H1 (cell line): ENCODE measurements at regions of chr7 and their contacts with region 1.

Region 1: DNA sequence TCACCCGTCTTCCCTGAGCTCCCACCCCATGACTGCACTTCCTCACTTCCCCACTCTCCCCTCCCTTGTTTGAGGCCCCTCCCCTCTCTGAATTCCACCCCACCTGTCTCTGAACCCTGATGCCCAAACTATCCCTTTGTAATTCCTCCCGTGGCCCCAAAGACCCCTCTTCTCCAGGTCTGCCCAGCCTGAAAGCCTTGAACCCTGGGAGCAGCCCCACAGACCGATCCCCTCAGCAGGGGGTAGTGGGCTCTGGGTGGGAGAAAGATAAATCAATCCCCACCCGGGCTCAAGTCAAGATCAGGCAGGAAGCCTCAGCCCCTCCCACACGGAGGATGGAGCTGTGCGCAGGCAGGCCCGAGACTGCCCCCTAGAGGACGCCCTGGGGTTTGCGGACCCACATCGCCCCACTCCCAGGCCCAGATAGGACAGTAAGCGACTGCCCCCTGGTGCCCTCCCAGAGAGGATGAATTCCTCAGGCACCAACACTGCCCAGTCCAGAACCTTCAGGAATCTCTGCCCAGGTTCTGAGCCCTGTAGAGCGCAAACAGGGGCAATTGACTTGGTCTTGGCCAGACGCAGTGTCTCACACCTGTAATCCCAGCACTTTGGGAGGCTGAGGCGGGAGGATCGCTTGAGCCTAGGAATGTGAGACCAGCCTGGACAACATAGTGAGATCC is 11.7 kb downstream of the HSPB1 start:
- DNase-seq: peak; percentile 95 to 100
- H3K4me3 ChIP-seq: peak overlapping the region in 3 of 4 experiments; percentile 34 to 62 (median 49); a peak in 5 of 8 replicates
- H3K27ac ChIP-seq: no peak overlapping the region
- H3K4me1 ChIP-seq: peaks cover 0 to 14% (median 7%) of the 10 kb centered on the region in 4 experiments; a peak in 6 of 7 replicates
- H3K27me3 ChIP-seq: no peaks in the 10 kb centered on the region
- CTCF ChIP-seq: peak; percentile 99 to 100 (median 100)
- EP300 ChIP-seq: no peak
- POLR2A ChIP-seq: no peak
- RAD21 ChIP-seq: peak; percentile 99 to 100

Region 2: DNA sequence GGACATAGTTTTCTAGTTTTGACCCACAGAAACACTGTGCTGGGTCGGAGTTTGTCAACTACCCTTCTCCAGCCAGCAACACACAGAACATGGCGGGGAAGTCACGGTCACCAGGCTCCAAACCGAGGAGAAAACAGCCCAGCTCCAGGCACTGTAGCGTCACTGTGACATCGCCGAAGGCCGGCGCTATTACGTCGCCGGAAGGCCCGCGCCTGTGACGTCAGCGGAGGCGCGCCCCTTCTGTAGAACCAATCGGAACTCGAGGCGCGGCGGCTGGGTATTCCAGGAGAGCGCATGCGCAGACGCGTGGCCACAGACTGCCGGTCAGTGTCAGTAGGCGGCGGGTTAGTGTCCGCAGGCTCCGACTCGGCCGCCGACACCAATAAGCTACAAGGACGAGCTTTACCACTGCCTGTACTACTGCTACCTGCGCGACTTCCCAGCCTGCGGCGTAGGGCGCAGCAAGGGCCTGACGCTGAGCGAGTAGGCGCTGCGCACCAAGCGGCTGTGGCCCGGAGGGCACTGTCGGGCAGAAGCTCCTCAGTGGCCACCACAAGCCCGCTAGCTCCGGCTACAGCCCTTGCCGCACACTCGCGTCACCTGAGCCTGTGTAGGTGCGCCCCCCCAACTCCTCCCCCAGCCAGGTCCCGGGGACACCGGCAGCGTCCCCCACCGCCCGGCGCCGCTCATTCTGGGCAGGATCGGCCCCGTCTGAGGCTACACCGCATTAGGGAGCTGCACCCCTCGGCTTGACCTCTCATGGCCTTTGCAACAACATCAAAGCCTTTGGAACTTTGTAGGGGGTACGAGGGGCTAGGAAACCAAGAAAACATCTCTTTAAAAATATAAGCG is 147.6 kb before region 1 on chr7:
- CTCF ChIA-PET with region 1: interaction called, 10 read pairs
- POLR2A ChIA-PET with region 1: no interaction called
- DNase-seq: peak; percentile 87 to 99
- H3K4me3 ChIP-seq: peak overlapping the region; percentile 54 to 69 (median 56)
- H3K27ac ChIP-seq: peak overlapping the region; percentile 87
- H3K4me1 ChIP-seq: peaks cover 2 to 17% (median 9%) of the 10 kb centered on the region in 4 experiments
- H3K27me3 ChIP-seq: no peaks in the 10 kb centered on the region
- CTCF ChIP-seq: no peak
- EP300 ChIP-seq: peak in 1 of 2 experiments; percentile 68; a peak in 1 of 3 replicates
- POLR2A ChIP-seq: peak; percentile 49 to 86
- RAD21 ChIP-seq: peak in 1 of 2 experiments; percentile 14; a peak in 2 of 4 replicates

Region 3: DNA sequence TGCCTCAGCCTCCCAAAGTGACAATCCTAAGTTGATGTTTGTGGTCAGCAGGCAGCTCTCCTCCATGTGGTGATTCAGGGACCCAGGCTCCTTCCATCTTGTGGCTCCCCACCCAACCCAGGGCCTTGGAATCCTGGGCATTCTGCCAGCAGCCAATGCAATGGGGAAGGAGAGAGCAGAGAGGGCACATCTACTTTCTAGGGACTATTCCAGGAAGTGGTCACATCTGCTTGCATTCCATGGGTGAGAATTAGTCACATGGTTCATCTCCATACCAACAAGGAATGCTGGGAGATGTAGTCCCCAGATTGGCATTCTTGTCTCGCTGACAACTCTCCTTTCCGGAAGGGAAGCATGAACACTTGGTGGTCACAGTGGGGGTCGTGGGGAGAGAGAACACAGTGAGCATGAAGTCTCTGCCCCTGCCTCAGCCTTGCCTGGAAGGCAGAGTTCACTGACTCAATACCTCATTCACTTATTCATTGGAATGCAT is 122.4 kb before region 1 on chr7:
- CTCF ChIA-PET with region 1: interaction called, 11 read pairs
- POLR2A ChIA-PET with region 1: interaction called, 4 read pairs
- DNase-seq: peak; percentile 34 to 71
- H3K4me3 ChIP-seq: no peak overlapping the region
- H3K27ac ChIP-seq: no peak overlapping the region
- H3K4me1 ChIP-seq: peaks cover 0 to 7% (median 4%) of the 10 kb centered on the region in 4 experiments; a peak in 5 of 7 replicates
- H3K27me3 ChIP-seq: no peaks in the 10 kb centered on the region
- CTCF ChIP-seq: no peak
- EP300 ChIP-seq: no peak
- POLR2A ChIP-seq: peak in 1 of 2 experiments; percentile 46; a peak in 1 of 3 replicates
- RAD21 ChIP-seq: no peak

Region 4: DNA sequence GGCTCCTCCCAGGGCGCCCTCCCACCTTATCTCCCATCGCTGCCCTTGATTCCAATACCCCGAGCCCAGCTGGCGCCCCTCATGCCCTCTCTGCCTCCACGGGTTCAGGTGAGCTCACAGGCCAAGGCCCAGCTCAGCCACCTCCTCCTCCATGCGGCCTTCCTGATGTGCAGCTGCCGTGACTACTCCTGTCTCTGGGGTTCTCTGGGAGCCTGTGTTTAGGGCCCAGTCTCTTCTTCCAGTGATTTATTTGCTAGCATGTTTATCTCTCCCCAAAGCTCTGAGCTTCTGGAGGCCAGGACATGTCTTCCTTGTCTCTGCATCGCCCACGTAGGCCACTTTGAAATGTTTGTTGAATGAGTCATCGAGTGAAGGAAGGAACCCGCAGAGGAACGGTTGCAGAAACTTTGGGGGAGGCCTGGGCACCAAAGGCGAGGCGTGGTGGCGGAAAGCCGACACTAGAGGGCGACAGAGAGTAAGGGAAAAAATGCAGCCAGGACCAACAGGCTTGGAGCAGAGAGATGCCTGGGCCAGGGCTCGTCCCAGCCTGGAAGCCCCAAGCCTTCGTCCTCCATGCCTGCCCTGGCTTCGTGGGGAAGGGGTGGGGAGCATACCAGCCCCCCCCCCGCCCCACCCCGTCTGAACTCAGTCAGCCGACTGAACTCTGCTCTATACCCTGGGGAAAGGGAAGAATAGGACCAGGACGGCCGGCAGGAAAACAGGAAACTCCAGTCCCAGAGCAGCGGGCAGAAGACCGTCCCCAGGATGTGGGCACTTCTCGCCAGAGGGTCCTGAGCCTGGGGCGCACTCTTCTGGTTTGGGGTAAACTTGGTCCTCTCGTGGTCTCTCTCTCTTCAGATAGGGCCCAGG is 22.6 kb before region 1 on chr7:
- CTCF ChIA-PET with region 1: interaction called, 426 read pairs
- POLR2A ChIA-PET with region 1: interaction called, 8 read pairs
- DNase-seq: peak; percentile 91 to 99
- H3K4me3 ChIP-seq: peak overlapping the region in 1 of 4 experiments; percentile 23; a peak in 1 of 8 replicates
- H3K27ac ChIP-seq: peak overlapping the region; percentile 53; the same call in 1 of the 2 replicates
- H3K4me1 ChIP-seq: peaks cover 0 to 22% (median 11%) of the 10 kb centered on the region in 4 experiments; a peak in 6 of 7 replicates
- H3K27me3 ChIP-seq: no peaks in the 10 kb centered on the region
- CTCF ChIP-seq: peak; percentile 94 to 99 (median 95)
- EP300 ChIP-seq: peak in 1 of 2 experiments; percentile 34; a peak in 1 of 3 replicates
- POLR2A ChIP-seq: no peak
- RAD21 ChIP-seq: peak; percentile 89 to 92

Region 5: GRCh38 chr7:76333511-76334101 is 19.4 kb after region 1 on chr7:
- CTCF ChIA-PET with region 1: interaction called, 6 read pairs
- POLR2A ChIA-PET with region 1: interaction called, 14 read pairs
- DNase-seq: no peak
- H3K4me3 ChIP-seq: no peak overlapping the region
- H3K27ac ChIP-seq: no peak overlapping the region
- H3K4me1 ChIP-seq: peaks cover 0 to 4% (median 2%) of the 10 kb centered on the region in 4 experiments; a peak in 3 of 7 replicates
- H3K27me3 ChIP-seq: no peaks in the 10 kb centered on the region
- CTCF ChIP-seq: no peak
- EP300 ChIP-seq: no peak
- POLR2A ChIP-seq: no peak
- RAD21 ChIP-seq: no peak

Region 6: GRCh38 chr7:76409537-76409936 is 95.4 kb after region 1 on chr7 and contains the start of gene SSC4D:
- CTCF ChIA-PET with region 1: no interaction called
- POLR2A ChIA-PET with region 1: no interaction called
- DNase-seq: peak in 1 of 2 experiments; percentile 79
- H3K4me3 ChIP-seq: peak within 1 kb of the TSS; percentile 40 to 69 (median 44); a peak in 6 of 8 replicates
- H3K27ac ChIP-seq: no peak within 1 kb of the TSS
- H3K4me1 ChIP-seq: peaks cover 0 to 7% (median 1%) of the 10 kb centered on the region in 4 experiments; a peak in 5 of 7 replicates
- H3K27me3 ChIP-seq: no peaks in the 10 kb centered on the region
- CTCF ChIP-seq: no peak
- EP300 ChIP-seq: no peak
- POLR2A ChIP-seq: no peak
- RAD21 ChIP-seq: no peak
- total RNA-seq, gene SSC4D: 10.8 and 11.8 TPM in 2 replicates